ENCODE measurements at regions of chr10 and their contacts with region 1.

Region 1: DNA sequence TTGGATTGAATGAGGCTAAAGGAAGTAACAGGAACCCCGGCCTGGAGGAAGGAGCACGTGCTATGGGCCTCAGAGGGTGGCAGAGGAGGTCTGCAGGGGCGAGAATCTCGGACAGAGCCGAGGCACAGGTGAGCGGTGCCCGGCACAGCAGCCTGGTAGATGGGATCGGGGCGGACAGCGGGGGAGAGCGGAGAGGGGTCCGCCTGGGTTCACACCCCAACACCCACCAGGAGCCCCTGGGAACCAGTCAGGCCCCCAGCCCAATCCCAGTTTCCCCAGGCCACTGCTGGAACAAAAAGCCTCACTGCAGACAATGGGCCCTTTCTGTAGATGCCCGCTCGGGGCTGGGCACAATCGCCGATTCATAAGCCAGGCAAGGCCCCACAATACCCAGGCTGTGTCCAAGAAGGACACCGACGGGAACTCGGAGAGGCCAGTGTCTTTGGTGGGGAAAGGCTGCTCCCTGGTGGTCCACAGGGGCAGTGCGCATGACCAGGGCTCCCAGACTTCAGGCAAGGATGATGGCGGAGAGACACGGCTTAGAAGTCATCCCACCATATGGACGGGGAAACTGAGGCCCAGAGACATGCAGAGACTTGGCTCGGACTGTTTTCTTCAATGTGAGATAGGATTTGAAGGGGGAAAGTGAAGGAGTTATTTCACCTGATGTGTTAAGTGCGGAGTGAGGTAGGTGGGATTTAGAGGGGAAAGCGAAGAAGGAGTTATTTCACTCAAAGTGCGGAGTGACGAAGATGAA is 106.9 kb upstream of the GPR26 start:
- DNase-seq: peak; percentile 48 to 82 (median 67)
- ATAC-seq: peak; percentile 68
- H3K4me3 ChIP-seq: no peak overlapping the region
- H3K4me3 Mint-ChIP-seq: no peak overlapping the region
- H3K27ac ChIP-seq: no peak overlapping the region
- H3K27ac Mint-ChIP-seq: no peak overlapping the region
- H3K4me1 ChIP-seq: no peaks in the 10 kb centered on the region
- H3K4me1 Mint-ChIP-seq: no peaks in the 10 kb centered on the region
- H3K27me3 ChIP-seq: no peaks in the 10 kb centered on the region
- H3K27me3 Mint-ChIP-seq: peaks cover 15% of the 10 kb centered on the region
- CTCF ChIP-seq: peak; percentile 95

Region 2: GRCh38 chr10:122298598-122299301 is 1260.5 kb before region 1 on chr10:
- CTCF ChIA-PET with region 1: no interaction called
- POLR2A ChIA-PET with region 1: no interaction called
- intact Hi-C with region 1: loop called in 1 of 2 experiments (anchors 2 kb)
- DNase-seq: peak; percentile 44 to 79 (median 67)
- ATAC-seq: peak; percentile 86
- H3K4me3 ChIP-seq: no peak overlapping the region
- H3K4me3 Mint-ChIP-seq: no peak overlapping the region
- H3K27ac ChIP-seq: no peak overlapping the region
- H3K27ac Mint-ChIP-seq: no peak overlapping the region
- H3K4me1 ChIP-seq: peaks cover 10% of the 10 kb centered on the region
- H3K4me1 Mint-ChIP-seq: peaks cover 10% of the 10 kb centered on the region
- H3K27me3 ChIP-seq: no peaks in the 10 kb centered on the region
- H3K27me3 Mint-ChIP-seq: peaks cover 2% of the 10 kb centered on the region
- CTCF ChIP-seq: peak; percentile 85

Region 3: DNA sequence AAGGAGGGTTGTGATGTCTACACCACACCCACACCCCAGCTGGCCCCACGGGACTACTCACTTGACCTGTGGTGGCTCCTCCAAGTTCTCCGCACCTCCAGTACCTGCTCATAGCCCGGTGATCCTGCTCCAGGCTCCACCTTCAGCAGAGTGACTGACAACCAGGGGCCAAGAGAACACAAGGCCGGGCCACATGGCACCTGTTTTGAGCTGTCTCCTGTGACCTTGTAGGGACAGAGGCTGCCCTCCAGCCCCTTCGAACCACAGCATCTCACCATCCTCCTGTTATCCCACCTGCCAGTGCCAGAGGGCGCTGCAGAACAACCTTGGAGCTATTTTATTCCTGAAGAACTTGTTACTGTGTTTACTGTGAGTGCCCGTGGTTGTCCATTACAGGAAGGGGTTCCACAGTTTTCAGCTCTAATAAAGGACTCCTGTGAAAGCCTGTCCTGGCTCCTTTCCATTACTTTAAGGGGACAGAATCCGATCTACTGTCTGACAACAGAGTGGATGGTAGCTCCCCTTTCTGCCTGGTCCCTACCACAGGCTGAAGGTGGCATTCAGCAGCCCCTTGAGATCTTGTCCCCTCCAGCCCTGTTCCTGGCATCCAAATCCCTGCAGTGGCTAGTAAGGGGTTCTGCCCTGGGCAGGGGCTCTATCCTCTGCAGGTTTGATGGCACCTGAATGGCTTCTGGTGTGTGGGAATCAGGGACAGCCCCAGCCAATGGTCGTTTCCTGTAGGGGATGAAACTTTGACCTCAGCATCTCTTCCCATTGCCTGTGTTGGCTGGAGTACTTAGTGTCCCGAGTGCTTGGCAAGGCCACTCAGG is 910.4 kb before region 1 on chr10:
- CTCF ChIA-PET with region 1: interaction called, 3 read pairs
- POLR2A ChIA-PET with region 1: interaction called, 6 read pairs
- intact Hi-C with region 1: loop called in 1 of 2 experiments (anchors 2 kb)
- DNase-seq: peak in 2 of 9 experiments; percentile 14 to 19
- ATAC-seq: no peak
- H3K4me3 ChIP-seq: no peak overlapping the region
- H3K4me3 Mint-ChIP-seq: no peak overlapping the region
- H3K27ac ChIP-seq: no peak overlapping the region
- H3K27ac Mint-ChIP-seq: no peak overlapping the region
- H3K4me1 ChIP-seq: no peaks in the 10 kb centered on the region
- H3K4me1 Mint-ChIP-seq: no peaks in the 10 kb centered on the region
- H3K27me3 ChIP-seq: no peaks in the 10 kb centered on the region
- H3K27me3 Mint-ChIP-seq: peaks cover 16% of the 10 kb centered on the region
- CTCF ChIP-seq: peak; percentile 35

Region 4: GRCh38 chr10:123043409-123043925 is 515.8 kb before region 1 on chr10:
- CTCF ChIA-PET with region 1: interaction called, 15 read pairs
- POLR2A ChIA-PET with region 1: no interaction called
- intact Hi-C with region 1: loop called (anchors 1 kb)
- DNase-seq: peak in 8 of 9 experiments; percentile 11 to 66 (median 42)
- ATAC-seq: peak; percentile 75
- H3K4me3 ChIP-seq: no peak overlapping the region
- H3K4me3 Mint-ChIP-seq: no peak overlapping the region
- H3K27ac ChIP-seq: no peak overlapping the region
- H3K27ac Mint-ChIP-seq: no peak overlapping the region
- H3K4me1 ChIP-seq: no peaks in the 10 kb centered on the region
- H3K4me1 Mint-ChIP-seq: peaks cover 7% of the 10 kb centered on the region
- H3K27me3 ChIP-seq: no peaks in the 10 kb centered on the region
- H3K27me3 Mint-ChIP-seq: no peaks in the 10 kb centered on the region
- CTCF ChIP-seq: peak; percentile 68

Measured in CD8-positive, alpha-beta T cell (primary cell).